ENCODE measurements at regions of chr9 and their contacts with region 1.

Region 1: DNA sequence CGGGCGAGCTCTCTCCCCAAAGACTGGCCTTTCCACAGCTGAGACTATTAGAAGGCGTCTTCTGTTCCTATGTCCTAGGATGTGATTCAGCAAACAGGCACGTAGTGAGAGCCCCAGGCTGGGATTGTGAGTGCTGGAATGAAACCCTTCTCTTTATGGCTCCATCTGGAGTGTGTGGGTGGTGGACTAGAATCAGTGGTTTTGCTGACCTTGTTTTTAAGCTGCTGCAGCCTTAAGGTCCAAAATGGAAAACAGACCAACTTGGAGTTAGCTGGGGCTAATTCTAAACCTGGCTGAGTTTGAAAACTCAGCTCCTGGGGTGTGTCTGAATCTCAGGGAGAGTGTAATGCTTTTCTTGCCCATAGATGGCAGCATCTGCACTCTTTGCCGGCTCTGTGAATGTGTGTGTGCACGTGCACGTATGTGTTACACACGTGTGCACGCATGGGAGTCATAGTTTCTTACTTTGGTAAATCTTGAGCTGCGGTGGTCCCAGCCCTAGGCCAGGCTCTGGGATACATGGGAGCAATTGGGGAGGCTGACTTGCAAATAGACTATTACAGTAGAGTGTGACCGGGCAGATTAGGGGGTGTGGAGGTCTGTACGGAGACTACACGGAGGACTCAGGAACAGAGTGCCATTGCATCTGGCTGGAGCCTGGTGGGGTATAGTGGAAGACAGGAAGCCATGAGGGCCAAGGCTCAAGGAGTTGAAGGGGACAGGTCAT is 10.7 kb downstream of the GSN start:
- DNase-seq: peak; percentile 43
- ATAC-seq: peak; percentile 85
- H3K4me3 Mint-ChIP-seq: no peak overlapping the region
- H3K27ac Mint-ChIP-seq: no peak overlapping the region
- H3K4me1 Mint-ChIP-seq: peaks cover 22% of the 10 kb centered on the region
- H3K27me3 Mint-ChIP-seq: peaks cover 52% of the 10 kb centered on the region
- CTCF ChIP-seq: peak; percentile 65

Region 2: GRCh38 chr9:120755827-120756434 is 522.8 kb before region 1 on chr9:
- CTCF ChIA-PET with region 1: no interaction called
- POLR2A ChIA-PET with region 1: no interaction called
- DNase-seq: peak; percentile 67
- ATAC-seq: peak; percentile 74
- H3K4me3 Mint-ChIP-seq: no peak overlapping the region
- H3K27ac Mint-ChIP-seq: no peak overlapping the region
- H3K4me1 Mint-ChIP-seq: no peaks in the 10 kb centered on the region
- H3K27me3 Mint-ChIP-seq: no peaks in the 10 kb centered on the region
- CTCF ChIP-seq: peak; percentile 84

Region 3: DNA sequence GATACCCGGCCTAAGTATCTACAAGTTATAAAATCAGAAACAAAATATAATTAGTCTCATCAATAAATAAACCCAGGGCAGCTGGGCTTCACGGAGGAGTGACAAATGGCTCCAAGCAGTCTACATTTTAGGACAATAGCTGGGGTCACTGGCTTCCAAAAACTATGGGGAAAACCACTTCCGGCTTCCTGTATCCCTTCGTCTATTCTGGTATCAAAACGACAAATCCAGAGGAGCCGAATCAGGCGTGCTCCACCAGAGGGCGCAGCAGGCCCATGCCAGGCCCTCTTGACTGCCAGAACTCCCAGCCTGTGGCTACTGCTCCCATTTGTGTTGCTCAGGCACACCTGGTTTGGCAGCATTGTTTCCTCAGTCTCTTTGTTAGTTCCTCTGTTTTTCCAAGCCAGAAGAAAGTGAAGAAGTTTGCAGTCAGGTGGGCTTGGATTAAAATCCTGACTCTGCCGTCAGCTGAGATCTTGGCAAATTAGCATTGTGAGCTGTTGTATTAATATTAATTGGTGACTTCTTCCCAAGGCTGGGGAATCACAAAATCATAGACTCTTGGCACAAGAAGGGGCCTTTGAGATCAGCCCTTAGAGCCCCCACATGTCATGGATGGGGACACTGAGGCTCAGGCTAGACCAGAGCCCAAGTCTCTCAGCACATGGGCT is 65.4 kb before region 1 on chr9:
- CTCF ChIA-PET with region 1: interaction called, 24 read pairs
- POLR2A ChIA-PET with region 1: no interaction called
- DNase-seq: peak; percentile 93
- ATAC-seq: peak; percentile 98
- H3K4me3 Mint-ChIP-seq: no peak overlapping the region
- H3K27ac Mint-ChIP-seq: no peak overlapping the region
- H3K4me1 Mint-ChIP-seq: peaks cover 10% of the 10 kb centered on the region
- H3K27me3 Mint-ChIP-seq: no peaks in the 10 kb centered on the region
- CTCF ChIP-seq: peak; percentile 84

Region 4: DNA sequence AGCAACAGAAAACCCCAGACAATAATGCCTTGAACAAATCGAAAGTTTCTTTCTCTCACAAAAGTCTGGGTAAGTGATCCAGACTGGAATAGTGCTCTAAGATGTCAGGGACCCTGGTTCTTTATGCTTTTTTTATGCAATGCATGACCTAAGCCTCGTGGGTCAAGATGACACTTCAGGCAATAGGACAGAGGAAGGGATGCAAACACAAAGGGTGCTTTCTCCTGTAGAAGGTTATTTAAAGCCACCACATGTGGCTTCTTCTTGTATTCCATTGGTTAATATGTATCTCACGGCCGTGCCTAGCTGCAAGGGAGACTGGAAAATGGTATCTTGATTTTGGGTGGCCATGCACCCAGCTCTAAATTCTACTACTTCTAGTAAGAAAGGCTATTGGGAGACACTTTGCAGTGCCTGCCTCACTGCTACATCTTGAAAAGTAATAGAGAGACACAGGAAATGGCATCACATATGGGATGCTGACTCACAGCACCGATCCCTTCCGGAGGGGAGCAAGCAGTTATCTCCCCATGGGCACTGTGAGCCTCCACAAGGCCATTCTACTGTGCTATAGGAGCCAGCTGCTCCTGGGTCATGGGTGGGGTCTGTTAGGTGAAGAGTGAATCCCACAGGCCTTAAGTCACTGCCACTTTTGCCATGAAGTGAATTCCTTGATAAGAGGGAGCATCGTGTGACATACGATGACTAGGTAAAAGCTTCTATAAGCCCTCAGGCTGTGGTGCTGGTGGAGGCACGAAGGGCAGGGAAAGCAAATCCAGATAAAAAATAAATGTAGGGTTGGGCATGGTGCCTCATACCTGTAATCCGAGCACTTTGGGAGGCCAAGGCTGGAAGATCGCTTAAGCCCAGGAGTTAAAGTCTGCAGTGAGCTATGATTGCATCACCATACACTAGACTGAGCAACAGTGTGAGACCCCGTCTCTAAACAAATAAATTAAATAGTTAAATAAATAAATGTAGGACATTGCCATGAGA is 44.5 kb before region 1 on chr9:
- CTCF ChIA-PET with region 1: interaction called, 10 read pairs
- POLR2A ChIA-PET with region 1: no interaction called
- DNase-seq: no peak
- ATAC-seq: no peak
- H3K4me3 Mint-ChIP-seq: no peak overlapping the region
- H3K27ac Mint-ChIP-seq: no peak overlapping the region
- H3K4me1 Mint-ChIP-seq: peaks cover 7% of the 10 kb centered on the region; the same call in 1 of the 2 replicates
- H3K27me3 Mint-ChIP-seq: peaks cover 11% of the 10 kb centered on the region
- CTCF ChIP-seq: no peak

Region 5: DNA sequence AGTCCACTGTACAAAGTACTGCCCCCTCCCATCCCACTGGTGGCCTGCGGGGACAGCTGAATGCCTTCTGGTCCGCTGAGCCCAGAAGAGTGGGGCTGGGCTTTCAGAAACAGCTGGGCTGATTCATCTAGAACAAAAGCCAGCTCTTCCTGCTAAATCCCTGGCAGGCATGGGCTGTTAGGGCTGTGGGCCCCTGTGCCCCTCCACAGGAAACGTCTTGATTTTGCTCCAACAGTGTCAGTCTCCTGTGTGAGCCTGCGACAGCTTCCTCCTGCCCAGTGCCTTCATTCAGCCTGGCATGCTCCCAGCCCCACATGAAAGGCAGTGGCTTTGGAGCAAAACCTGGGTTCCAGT is 17.6 kb before region 1 on chr9:
- CTCF ChIA-PET with region 1: interaction called, 19 read pairs
- POLR2A ChIA-PET with region 1: no interaction called
- DNase-seq: no peak
- ATAC-seq: peak; percentile 74
- H3K4me3 Mint-ChIP-seq: no peak overlapping the region
- H3K27ac Mint-ChIP-seq: no peak overlapping the region
- H3K4me1 Mint-ChIP-seq: peaks cover 21% of the 10 kb centered on the region
- H3K27me3 Mint-ChIP-seq: peaks cover 42% of the 10 kb centered on the region
- CTCF ChIP-seq: no peak

Region 6: GRCh38 chr9:121299467-121300234 is 21.0 kb after region 1 on chr9:
- CTCF ChIA-PET with region 1: interaction called, 19 read pairs
- POLR2A ChIA-PET with region 1: no interaction called
- DNase-seq: peak; percentile 23
- ATAC-seq: peak; percentile 56
- H3K4me3 Mint-ChIP-seq: peak overlapping the region; percentile 74
- H3K27ac Mint-ChIP-seq: no peak overlapping the region
- H3K4me1 Mint-ChIP-seq: peaks cover 23% of the 10 kb centered on the region
- H3K27me3 Mint-ChIP-seq: peaks cover 21% of the 10 kb centered on the region
- CTCF ChIP-seq: no peak

Region 7: DNA sequence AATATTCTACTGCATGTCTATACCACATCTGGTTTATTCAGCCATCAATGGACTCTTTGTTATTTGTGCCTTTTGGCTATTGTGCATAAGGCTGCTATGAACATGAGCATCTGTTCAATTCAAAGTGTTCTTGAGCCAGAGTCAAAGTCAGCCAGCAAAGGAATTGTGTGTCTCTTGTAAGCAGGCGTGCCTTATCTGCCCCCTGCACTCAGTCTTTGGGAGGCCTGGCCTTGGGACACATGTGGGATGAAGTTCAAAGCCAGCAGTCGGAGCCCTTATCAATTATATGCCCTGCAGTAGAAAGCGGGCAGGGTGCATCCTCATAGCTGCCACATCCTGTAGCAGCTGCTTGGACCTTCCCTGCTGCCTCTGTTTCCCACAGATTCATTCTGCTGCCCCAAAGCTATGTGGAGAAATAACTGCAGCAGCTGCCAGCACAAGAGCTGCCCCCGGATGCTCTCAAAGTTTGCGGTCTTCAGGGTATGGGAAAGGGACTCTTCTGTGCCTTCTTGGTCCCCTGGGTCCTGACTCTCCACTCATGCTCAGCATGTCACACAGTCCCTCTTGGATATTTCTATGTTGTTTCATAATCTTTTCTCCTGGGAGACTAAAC is 55.4 kb after region 1 on chr9:
- CTCF ChIA-PET with region 1: no interaction called
- POLR2A ChIA-PET with region 1: no interaction called
- DNase-seq: no peak
- ATAC-seq: no peak
- H3K4me3 Mint-ChIP-seq: no peak overlapping the region
- H3K27ac Mint-ChIP-seq: no peak overlapping the region; the same call in 1 of the 2 replicates
- H3K4me1 Mint-ChIP-seq: no peaks in the 10 kb centered on the region
- H3K27me3 Mint-ChIP-seq: no peaks in the 10 kb centered on the region
- CTCF ChIP-seq: no peak

Measured in WTC11 (cell line).